ENCODE measurements at regions of chr12 and their contacts with region 1.

Region 1: DNA sequence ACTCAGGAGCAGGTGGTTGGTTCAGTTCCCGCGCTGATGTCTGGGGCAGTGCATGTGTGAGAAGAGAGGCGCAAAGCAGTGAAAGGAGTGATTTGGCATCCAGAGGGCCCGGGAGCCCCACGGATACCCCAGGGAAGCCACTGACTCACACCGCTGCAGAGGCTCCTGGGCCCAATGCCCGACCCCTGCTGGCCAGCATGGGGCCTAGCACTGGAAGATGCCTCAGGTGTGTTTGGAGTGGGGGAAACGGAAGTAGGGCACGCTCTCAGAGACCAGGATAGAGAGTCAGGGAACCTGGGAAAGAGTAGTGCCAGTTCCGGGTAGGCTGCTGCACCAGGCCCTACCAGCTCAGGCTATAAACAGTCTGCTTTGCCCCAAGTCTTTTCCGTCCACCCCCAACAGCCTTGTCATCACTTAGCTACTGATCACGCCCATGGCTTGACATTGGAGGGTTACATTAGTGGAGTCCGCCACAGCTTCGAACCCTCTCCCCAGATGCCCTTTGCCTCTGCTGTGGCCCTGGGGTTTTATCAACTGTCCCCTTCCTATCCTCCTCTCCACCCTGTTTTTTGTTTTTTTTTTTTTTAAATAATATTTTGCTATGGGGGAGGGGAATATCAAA is 9.5 kb upstream of the CSAD start:
- DNase-seq: peak in 1 of 2 experiments; percentile 81
- H3K4me3 ChIP-seq: no peak overlapping the region
- H3K27ac ChIP-seq: no peak overlapping the region
- H3K4me1 ChIP-seq: peaks cover 0 to 6% (median 3%) of the 10 kb centered on the region in 4 experiments; a peak in 4 of 7 replicates
- H3K27me3 ChIP-seq: peaks cover 0 to 8% (median 3%) of the 10 kb centered on the region in 4 experiments; a peak in 4 of 7 replicates
- CTCF ChIP-seq: peak; percentile 86 to 97 (median 89)
- EP300 ChIP-seq: no peak
- POLR2A ChIP-seq: no peak
- RAD21 ChIP-seq: peak; percentile 63 to 75

Region 2: DNA sequence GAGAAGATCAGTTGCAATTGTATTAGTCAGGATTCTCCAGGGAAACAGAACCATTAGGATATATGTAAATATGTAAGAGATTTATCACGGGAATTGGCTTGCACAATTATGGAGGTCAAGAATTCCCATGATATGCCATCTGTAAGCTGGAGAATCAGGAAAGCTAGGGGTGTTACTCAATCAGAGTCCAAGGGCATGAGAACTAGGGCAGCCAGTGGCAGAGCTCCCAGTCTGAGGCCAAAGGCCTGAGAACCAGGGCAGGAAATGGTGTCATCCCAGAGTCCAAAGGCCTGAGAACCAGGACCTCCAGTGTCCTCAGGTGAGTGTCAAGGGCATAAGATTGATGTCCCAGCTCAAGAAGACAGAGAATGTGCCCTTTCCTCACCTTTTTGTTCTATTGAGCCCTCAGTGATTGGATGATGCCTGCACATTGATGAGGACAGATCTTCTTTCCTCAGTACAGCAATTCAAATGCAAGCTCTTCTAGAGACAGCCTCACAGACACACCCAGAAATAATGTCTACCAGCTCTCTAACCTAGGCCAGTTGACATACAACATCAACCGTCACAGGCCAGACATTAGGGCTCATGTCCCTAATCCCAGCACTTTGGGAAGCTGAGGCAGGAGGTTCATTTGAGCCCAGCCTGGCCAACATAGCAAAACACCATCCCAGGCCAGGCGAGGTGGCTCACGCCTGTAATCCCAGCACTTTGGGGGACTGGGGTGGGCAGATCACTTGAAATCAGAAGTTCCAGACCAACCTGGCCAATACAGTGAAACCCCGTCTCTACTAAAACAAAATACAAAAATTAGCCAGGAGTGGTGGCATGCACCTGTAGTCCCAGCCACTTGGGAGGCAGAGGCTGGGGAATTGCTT is 44.6 kb before region 1 on chr12:
- CTCF ChIA-PET with region 1: no interaction called
- POLR2A ChIA-PET with region 1: no interaction called
- DNase-seq: no peak
- H3K4me3 ChIP-seq: no peak overlapping the region
- H3K27ac ChIP-seq: no peak overlapping the region
- H3K4me1 ChIP-seq: peaks cover 0 to 2% (median 0%) of the 10 kb centered on the region in 4 experiments; a peak in 2 of 7 replicates
- H3K27me3 ChIP-seq: no peaks in the 10 kb centered on the region
- CTCF ChIP-seq: no peak
- EP300 ChIP-seq: no peak
- POLR2A ChIP-seq: no peak
- RAD21 ChIP-seq: no peak

Region 3: DNA sequence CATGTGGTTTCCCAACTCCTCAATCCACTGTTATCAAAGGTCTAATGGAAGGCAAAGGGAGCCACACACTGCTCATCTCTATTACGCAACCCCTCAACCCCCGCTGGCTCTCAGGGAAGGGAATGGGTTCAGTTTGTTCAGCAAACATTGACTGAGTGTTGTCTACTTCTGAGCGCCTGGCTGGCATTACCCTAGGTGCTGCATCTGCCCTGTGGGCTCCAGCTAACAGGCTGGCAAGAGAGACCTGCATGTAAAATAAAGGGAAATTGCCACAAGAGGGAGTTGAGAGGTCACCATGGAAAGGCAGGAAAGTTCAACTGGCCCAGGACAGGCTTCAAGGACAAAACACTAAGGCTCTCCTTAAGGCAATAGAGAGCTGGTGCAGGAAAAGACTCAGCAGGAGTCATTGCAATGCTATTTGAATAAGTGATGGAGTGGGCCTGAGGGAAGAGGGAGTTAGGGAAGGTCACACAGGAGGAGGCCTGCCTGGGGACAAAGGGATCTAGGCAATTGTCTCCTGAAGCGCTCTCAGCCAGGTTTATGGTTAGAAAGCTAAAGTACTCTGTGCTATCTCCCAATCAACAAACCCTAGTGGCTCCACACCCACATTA is 15.2 kb before region 1 on chr12:
- CTCF ChIA-PET with region 1: interaction called, 164 read pairs
- POLR2A ChIA-PET with region 1: interaction called, 13 read pairs
- DNase-seq: no peak
- H3K4me3 ChIP-seq: no peak overlapping the region
- H3K27ac ChIP-seq: no peak overlapping the region
- H3K4me1 ChIP-seq: peaks cover 1 to 9% (median 5%) of the 10 kb centered on the region in 4 experiments; a peak in 4 of 7 replicates
- H3K27me3 ChIP-seq: peaks cover 14 to 74% (median 57%) of the 10 kb centered on the region in 4 experiments
- CTCF ChIP-seq: peak in 2 of 3 experiments; percentile 64 to 66; a peak in 3 of 4 replicates
- EP300 ChIP-seq: no peak
- POLR2A ChIP-seq: no peak
- RAD21 ChIP-seq: peak; percentile 56 to 62

Measured in H1 (cell line).